Lower lobe of right lung (tissue), 2 donors: ENCODE measurements at regions of chr14 and their contacts with region 1.

Region 1: DNA sequence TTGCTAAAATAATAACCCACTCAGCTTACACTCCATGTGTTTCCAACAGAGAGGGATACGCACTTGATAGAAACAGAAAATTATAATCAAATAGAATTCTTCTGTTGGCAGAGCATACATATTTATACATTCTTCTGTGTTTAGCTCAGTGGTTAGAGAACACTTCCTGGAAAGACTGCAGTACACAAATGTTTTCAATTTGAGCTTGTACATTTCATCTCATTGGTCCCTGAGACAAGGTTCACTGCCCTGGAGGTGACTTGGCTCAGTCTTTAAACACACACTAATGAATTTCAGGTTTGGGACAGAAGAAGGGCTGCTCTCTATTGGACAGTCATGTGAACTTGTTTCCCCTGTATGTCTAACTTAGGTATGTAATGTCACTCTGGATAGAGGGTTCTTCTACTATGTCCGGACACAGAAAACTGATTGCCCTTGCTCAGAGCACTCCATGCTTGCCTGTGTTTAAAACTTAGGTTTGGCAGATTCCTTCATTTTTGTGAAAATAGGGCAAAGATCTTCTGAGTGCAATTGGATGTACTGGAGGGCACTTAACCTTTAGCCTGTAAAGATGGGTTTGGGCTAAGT is 22.9 kb downstream of the PROX2 start:
- DNase-seq: no peak
- ATAC-seq: peak; percentile 37 to 72
- H3K4me3 ChIP-seq: no peak overlapping the region
- H3K27ac ChIP-seq: peak overlapping the region; percentile 51
- H3K4me1 ChIP-seq: peaks cover 31% of the 10 kb centered on the region
- H3K27me3 ChIP-seq: no peaks in the 10 kb centered on the region
- CTCF ChIP-seq: no peak

Region 2: GRCh38 chr14:74501135-74501614 is 351.8 kb before region 1 on chr14:
- intact Hi-C with region 1: no loop called
- DNase-seq: peak; percentile 83
- ATAC-seq: peak; percentile 79 to 81
- H3K4me3 ChIP-seq: no peak overlapping the region
- H3K27ac ChIP-seq: no peak overlapping the region
- H3K4me1 ChIP-seq: no peaks in the 10 kb centered on the region
- H3K27me3 ChIP-seq: no peaks in the 10 kb centered on the region
- CTCF ChIP-seq: peak; percentile 61

Region 3: DNA sequence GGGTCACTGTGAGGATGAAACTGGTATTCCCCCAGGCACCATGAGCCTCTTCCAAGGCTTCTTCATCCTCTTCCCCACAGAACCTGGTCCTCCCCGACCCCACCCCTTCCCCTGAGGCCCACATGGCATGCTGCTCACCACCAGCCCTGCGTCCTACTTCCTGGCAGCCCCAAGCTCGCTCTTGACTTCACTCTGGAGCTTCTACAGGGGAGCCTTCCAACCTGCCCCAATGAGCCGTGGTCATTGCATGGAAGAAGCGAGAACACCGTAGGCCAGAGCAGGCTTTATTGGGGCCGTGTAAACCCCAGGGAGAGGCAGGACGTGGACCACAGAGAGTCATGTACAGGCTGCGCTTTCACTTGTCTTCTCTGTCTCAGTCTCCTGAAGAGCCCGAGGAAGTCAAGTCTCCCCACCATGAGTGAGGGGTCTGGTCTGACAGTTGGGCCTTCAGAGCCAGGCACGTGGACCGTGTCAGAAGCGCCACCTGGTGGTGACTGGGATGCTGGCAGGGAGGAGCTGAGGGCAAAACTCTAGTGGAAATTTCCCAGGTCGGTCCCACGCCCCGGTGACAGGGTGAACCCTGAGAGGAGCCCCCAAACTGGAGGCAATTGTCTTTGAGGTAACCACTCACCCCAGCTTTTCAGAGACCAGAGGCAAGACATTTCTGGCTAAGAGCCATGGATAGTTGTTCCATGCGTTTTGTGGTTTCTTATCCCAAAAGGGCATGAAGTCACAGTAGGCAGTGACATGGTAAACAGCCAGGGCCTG is 52.5 kb after region 1 on chr14:
- intact Hi-C with region 1: loop called (anchors 10 kb)
- DNase-seq: peak; percentile 81
- ATAC-seq: peak; percentile 69 to 71
- H3K4me3 ChIP-seq: no peak overlapping the region
- H3K27ac ChIP-seq: no peak overlapping the region
- H3K4me1 ChIP-seq: peaks cover 23% of the 10 kb centered on the region
- H3K27me3 ChIP-seq: no peaks in the 10 kb centered on the region
- CTCF ChIP-seq: peak; percentile 96

Region 4: DNA sequence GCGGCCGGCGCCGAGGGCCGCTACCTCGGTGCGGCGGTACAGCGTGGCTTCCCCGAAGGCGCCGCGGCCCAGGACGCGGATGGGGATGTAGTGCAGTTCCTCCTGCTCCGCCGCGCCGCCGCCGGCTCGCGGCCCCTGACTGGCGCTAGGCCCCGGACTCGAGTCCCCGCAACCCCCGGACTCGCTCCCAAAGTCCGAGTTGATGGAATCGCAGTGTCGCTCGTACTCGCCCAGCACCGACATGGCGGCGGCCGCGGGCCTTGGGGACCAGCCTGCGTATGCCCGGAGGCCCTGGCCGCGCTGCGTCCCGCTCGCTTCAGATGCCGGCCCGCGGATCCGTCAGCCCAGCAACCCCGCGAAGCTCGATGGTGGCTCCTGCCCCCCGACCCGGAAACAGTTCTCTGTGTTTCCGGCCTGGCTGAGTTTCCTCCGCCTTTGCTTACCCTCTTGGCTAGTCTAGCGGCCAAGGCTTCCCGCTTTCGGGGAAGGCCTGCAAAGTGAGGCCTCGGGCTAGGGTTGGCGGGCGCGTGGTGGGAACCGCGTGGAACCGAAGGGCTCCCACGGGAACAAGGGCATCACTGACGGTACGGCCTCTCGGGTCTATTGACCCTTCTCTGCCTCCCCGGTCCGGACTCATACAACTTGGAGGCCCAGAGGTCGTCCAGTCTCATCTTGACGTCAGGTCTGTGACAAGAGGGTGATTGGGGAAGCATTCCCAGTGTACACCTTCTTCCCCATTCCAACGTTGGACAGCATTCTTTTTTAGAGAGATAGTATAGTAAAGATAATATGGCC is 273.9 kb after region 1 on chr14 and contains the start of gene NEK9:
- intact Hi-C with region 1: no loop called
- DNase-seq: peak; percentile 93
- ATAC-seq: peak; percentile 96 to 98
- H3K4me3 ChIP-seq: peak within 1 kb of the TSS; percentile 94
- H3K27ac ChIP-seq: peak within 1 kb of the TSS; percentile 99
- H3K4me1 ChIP-seq: peaks cover 47% of the 10 kb centered on the region
- H3K27me3 ChIP-seq: no peaks in the 10 kb centered on the region
- CTCF ChIP-seq: no peak
- total RNA-seq, gene NEK9: 97.7 TPM